ENCODE measurements at regions of chr17 and their contacts with region 1.

Region 1: DNA sequence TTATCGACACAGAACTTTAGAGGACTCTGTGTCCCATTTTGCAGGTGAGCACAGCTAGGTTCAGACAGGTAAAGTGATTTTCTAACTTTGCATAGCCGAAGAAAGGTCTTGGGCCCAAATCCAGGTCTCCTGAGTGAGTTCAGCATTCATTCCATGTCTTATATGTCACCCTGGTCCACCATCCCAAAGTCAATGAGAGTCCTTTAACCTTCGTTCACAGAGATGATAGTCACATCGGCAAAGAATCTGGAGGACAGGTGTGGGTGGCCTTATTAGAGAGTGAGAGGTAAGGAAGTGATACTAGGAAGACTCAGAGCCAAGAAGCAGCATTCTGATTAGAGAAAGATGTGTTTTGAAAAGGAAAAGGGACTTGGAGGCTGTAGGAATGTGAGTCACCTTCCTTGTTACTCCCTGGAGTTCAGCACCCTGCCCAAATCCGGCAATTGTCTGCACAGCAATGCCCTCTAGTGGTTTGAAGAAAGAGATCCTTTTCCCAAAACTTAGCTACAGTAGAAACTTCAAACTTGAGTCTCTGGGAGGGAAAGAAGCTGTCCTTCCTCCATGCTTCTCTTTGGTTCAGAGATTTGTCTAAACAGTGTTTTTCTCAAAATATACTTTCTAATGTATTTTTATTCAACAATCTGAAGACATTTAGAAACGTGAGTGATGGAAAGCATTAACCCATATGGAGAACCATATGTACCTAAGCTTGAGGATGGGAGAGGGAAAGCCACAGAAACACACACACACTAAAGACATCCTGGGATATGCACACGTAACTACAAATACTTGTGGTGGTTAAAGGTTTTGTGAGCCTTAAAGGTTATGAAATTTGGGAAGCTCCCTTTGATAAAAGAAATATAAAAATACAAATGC is 96.4 kb upstream of the SHISA6 start:
- DNase-seq: peak; percentile 42 to 73 (median 55)
- H3K4me3 ChIP-seq: no peak overlapping the region
- H3K27ac ChIP-seq: no peak overlapping the region
- H3K4me1 ChIP-seq: no peaks in the 10 kb centered on the region
- H3K27me3 ChIP-seq: no peaks in the 10 kb centered on the region
- CTCF ChIP-seq: peak; percentile 49 to 69 (median 60)
- POLR2A ChIP-seq: no peak

Region 2: DNA sequence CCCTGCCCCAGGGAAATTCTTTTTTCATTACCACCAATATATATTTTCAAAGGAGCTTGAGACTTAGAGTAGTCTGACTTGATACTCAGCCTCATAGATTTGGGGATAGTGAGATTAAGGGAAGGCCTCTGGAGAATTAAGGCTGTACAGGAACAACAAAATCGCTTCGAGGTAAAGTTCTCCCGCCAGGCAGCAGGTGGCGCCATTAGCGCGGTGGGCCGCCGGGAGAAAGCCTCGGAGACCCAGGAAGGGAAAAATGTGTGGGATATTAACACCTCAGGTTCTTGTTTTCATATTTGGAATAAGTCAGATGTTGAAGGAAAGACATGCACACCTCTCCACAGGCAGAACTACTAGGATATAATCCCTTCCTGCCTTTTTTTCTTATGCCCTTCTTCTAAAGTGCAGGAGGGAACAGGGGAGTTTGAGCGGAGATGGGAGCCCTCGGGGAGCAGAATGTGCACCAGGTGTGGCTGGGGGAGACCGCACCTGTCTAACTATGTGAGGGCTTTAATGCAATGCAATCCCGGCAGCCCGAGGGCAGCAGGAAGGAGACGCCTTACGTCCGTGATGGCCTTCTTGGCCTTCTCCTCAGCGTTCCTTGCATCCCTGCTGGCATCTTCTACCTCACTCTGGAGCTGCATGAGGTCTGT is 513.4 kb before region 1 on chr17:
- intact Hi-C with region 1: loop called in 1 of 2 experiments (anchors 10 kb)
- DNase-seq: peak in 3 of 7 donors; percentile 10 to 27 (median 26)
- H3K4me3 ChIP-seq: no peak overlapping the region
- H3K27ac ChIP-seq: no peak overlapping the region
- H3K4me1 ChIP-seq: no peaks in the 10 kb centered on the region
- H3K27me3 ChIP-seq: no peaks in the 10 kb centered on the region
- CTCF ChIP-seq: peak; percentile 40 to 69 (median 50)
- POLR2A ChIP-seq: no peak

Region 3: DNA sequence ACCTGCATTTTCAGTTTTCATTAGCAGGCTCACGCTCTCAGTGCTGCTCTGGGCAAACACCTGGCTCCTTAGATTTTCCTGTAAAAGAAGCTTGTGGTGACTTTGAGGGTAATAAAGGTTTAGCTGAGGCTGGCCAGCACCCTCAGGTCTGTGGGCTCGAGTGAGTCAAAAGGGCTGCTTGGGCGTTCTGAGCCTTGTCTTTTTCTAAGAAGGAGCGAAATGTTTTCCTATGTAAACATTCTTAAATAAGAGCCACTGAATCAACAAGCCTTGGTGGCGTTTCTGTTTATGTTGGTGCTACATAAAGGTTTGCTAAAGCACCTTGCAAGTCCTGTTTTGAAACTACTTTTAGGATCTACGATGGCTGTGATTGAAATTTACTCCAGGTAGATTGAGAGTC is 135.3 kb after region 1 on chr17:
- intact Hi-C with region 1: no loop called
- DNase-seq: no peak
- H3K4me3 ChIP-seq: no peak overlapping the region
- H3K27ac ChIP-seq: peak overlapping the region in 1 of 5 donors; percentile 62
- H3K4me1 ChIP-seq: no peaks in the 10 kb centered on the region
- H3K27me3 ChIP-seq: no peaks in the 10 kb centered on the region
- CTCF ChIP-seq: no peak
- POLR2A ChIP-seq: no peak

Measured in adrenal gland (tissue), 19 donors.